ENCODE measurements at regions of chr16 and their contacts with region 1.

Region 1: DNA sequence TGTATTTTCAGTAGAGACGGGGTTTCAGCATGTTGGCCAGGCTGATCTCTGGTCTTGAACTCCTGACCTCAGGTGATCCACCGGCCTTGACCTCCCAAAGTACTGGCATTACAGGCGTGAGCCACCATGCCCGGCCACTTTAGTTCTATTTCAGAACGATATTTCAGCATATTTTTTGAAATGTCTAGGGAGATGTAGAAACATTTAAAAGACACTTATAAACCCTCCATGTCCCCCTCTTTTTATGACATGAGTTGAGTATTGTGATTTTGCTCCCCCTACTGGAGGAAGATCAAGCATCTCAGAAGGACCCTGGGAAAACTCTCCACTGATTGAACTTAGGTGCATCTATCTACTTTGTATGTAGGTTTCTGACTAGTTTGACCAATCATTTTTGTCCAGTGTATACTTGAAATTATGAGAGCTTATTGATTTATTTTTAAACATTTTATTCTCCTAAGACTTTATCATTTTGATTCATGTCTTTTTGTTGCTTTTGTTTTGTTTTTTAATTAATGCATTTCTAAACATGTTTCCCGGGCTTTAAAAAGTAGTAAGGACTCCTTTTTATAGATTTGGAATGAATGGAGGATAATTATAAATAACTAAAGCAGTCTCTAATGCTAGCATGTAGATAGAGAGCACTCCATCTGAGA is 105.1 kb downstream of the CHD9 start:
- DNase-seq: peak; percentile 34
- CTCF ChIP-seq: peak; percentile 61

Region 2: DNA sequence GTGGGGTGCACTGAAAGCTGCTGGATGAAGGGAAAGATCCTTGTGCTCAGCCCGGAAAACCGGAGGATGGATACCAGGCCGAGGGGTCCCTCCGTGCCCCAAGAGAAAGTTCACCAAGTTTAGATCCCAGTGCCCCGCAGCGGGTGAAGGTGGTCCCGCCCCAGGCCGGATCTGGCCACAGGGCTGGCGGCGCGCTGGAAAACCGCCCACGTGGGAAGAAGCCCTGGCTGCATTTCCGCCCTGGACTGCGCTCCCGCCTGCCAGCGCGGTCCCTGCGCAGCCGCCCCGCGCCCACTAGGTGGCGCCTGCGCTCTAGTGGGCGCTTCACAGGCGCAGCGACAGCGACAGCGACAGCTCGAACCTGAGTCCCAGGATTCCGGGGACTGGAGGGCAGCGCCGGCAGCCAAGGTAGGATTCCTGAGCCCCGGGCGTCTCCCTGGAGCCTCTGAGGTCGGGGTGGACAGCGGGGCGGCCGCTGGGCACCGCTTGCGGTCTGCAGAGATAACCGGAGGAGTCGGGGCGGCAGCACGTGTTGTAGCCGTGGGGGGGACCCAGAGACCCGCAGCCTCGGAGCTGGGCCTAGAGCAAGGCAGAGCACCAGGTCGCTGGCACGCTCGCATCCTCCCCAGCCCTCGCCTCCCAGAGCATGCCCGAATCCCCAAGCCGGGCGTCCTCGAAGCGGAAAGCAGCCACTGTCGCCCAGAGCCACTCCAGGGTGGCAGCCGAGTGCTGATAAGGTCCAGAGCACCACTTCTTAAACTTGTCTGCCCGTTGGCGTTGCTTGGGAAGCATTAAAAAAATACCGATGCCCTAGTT is 105.0 kb before region 1 on chr16 and contains the start of gene CHD9:
- in situ Hi-C with region 1: loop called (anchors 25 kb)
- DNase-seq: peak; percentile 85
- CTCF ChIP-seq: peak; percentile 99

Region 3: DNA sequence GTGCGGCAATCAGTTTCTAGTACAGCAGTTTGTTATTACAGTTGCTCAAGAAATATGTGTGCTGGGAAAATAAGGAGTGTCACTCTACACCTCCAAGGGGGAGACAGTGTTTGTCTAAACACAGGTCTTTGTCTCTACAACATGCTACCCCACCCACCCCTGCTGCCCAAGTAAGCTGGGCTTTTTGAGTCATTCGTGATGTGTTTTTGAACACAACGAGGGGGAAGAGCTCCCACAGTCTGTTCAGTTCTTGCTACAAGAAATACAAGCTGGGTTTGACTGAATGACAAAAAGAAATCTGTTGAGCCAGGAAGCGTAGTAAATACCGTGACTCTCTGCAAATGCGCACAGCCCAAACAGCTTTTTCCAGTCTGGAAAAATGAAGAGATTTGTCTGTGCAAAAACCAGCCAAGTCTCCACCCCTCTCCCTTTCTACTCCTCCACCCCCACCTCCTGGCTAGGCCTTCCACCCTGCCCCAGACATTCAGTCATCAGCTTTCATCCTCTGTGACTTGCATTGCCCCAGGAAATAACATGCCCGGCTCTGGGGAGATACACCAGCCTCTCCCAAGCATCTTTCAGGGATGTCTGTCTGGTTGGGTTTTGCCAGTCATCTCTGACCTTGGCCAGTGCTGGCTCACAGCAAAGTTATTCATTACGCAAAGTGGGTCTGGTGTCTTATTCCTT is 79.4 kb before region 1 on chr16:
- in situ Hi-C with region 1: no loop called
- DNase-seq: no peak
- CTCF ChIP-seq: no peak

Measured in GM13977 (cell line).